Posterior vena cava (tissue), 2 donors: ENCODE measurements at regions of chr2 and their contacts with region 1.

Region 1: GRCh38 chr2:235106874-235107639 is 155.2 kb downstream of the SH3BP4 start:
- DNase-seq: no peak

Region 2: GRCh38 chr2:233600386-233600785 is 1506.7 kb before region 1 on chr2:
- intact Hi-C with region 1: loop called in 1 of 2 experiments (anchors 5 kb)
- DNase-seq: no peak

Region 3: GRCh38 chr2:234550511-234551107 is 556.4 kb before region 1 on chr2:
- intact Hi-C with region 1: loop called (anchors 5 kb)
- DNase-seq: peak; percentile 86